ENCODE measurements at regions of chr15 and their contacts with region 1.

Region 1: DNA sequence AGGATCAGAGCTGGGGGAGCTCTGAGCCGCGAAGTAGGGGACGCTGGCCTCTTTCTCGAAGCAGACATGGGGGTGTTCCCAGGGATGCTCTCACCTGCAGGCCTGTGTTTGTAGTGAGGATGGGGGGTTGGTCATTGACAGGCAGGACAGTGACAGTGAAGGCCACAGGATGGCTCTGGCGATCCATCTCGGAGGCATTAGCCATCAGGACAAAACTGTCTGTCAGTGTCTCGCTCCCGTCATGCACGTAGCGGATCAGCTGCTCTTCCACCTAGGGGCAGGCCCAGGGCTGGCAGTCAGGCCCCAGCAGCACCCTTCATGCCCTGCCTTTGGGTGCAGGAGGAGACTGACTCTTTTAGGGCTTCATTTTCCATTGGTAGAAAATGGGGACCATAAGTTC is 28.0 kb downstream of the CSPG4 start:
- DNase-seq: peak in 1 of 2 experiments; percentile 47
- ATAC-seq: no peak
- H3K4me3 ChIP-seq: no peak overlapping the region
- H3K27ac ChIP-seq: no peak overlapping the region
- H3K4me1 ChIP-seq: no peaks in the 10 kb centered on the region
- CTCF ChIP-seq: no peak
- EP300 ChIP-seq: no peak
- POLR2A ChIP-seq: no peak
- RAD21 ChIP-seq: peak in 1 of 2 experiments; percentile 25; a peak in 1 of 5 replicates

Region 2: GRCh38 chr15:75647370-75648155 is 37.1 kb before region 1 on chr15 and contains the start of gene SNX33:
- CTCF ChIA-PET with region 1: interaction called, 394 read pairs
- POLR2A ChIA-PET with region 1: no interaction called
- DNase-seq: peak; percentile 81 to 89
- ATAC-seq: peak; percentile 84 to 90
- H3K4me3 ChIP-seq: peak within 1 kb of the TSS; percentile 75
- H3K27ac ChIP-seq: peak within 1 kb of the TSS; percentile 91 to 94
- H3K4me1 ChIP-seq: peaks cover 41% of the 10 kb centered on the region
- CTCF ChIP-seq: peak; percentile 67
- EP300 ChIP-seq: no peak
- POLR2A ChIP-seq: peak; percentile 83
- RAD21 ChIP-seq: peak in 1 of 2 experiments; percentile 42; a peak in 2 of 5 replicates
- polyA plus RNA-seq, gene SNX33: 8.4 and 10.7 TPM in 2 replicates

Region 3: DNA sequence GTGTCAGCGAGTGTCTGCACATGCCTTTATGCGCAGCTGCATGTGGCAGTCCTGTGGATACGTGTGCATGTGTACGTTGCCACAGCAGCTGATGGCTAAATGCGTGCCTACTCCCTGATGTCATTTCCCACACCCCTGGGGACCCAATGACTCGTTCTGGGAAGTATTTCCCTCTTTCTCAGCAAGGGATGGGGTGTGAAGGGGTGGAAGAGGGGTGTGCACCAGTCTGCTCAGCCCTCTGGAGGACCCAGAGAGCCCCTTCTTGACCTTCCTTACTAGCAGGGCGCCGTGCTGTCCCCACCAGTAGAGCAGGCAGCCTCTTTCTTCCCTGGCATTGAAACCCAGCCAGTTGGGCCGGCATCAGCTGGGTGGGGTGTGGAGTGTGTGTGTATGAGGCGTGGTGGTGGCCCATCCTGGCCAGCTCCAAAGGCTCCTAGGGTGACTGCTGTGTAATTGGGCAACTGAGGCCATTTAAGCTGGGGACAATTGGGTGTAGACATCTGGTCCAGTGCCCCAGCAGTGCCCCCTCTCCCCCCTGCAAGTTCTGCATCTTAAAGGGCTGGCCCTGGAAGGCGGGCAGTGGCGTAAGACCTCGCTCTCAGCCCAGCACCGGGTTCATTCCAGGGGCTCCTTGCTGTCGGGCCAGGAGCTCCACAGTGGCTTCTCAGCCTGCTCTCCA is 17.7 kb before region 1 on chr15:
- CTCF ChIA-PET with region 1: interaction called, 237 read pairs
- POLR2A ChIA-PET with region 1: no interaction called
- DNase-seq: peak; percentile 96 to 98
- ATAC-seq: peak; percentile 85
- H3K4me3 ChIP-seq: no peak overlapping the region
- H3K27ac ChIP-seq: peak overlapping the region; percentile 70 to 83
- H3K4me1 ChIP-seq: peaks cover 65% of the 10 kb centered on the region
- CTCF ChIP-seq: no peak
- EP300 ChIP-seq: peak; percentile 27 to 49; a peak in 3 of 5 replicates
- POLR2A ChIP-seq: no peak
- RAD21 ChIP-seq: no peak

Region 4: DNA sequence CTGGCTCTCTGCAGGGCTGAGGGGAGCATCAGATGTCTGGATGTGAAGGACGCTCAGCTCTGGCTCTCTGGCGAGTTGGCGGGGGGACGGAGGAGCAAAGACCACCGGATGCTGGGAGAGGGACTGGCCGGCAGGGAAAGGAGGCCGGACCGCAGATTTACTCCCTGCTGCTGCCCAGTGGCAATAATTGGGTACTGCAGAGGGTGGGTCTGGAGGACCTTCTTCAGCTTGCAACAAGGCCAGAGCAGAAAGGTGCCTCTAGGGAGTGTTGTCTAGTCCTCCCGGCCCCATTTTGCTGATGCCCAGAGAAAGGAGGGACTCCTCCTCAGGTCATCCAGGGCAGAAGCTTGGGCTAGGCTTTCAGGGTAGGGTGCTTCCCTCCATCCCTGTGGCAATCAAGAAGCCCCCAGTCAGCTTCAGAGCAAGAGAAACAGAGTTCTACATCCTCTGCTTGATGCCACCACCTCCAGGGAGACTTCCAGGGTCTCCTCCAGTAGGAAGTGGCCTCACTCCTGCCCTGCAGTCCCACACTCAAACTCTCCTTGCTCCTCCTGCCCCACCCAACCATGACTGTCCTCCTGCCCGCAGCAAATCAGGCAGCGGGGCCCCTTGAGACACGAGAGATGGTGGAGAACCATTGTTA is 48.3 kb after region 1 on chr15:
- CTCF ChIA-PET with region 1: interaction called, 61 read pairs
- POLR2A ChIA-PET with region 1: no interaction called
- DNase-seq: peak; percentile 65 to 82
- ATAC-seq: peak; percentile 71 to 88
- H3K4me3 ChIP-seq: no peak overlapping the region
- H3K27ac ChIP-seq: peak overlapping the region in 1 of 2 experiments; percentile 58; a peak in 2 of 6 replicates
- H3K4me1 ChIP-seq: peaks cover 6% of the 10 kb centered on the region; the same call in 2 of the 3 replicates
- CTCF ChIP-seq: peak; percentile 59
- EP300 ChIP-seq: no peak
- POLR2A ChIP-seq: no peak
- RAD21 ChIP-seq: peak; percentile 49 to 65